Activated CD4-positive, alpha-beta T cell treated with anti-CD3 and anti-CD28 coated beads for 36 hours (primary cell): ENCODE measurements at regions of chr17 and their contacts with region 1.

Region 1: DNA sequence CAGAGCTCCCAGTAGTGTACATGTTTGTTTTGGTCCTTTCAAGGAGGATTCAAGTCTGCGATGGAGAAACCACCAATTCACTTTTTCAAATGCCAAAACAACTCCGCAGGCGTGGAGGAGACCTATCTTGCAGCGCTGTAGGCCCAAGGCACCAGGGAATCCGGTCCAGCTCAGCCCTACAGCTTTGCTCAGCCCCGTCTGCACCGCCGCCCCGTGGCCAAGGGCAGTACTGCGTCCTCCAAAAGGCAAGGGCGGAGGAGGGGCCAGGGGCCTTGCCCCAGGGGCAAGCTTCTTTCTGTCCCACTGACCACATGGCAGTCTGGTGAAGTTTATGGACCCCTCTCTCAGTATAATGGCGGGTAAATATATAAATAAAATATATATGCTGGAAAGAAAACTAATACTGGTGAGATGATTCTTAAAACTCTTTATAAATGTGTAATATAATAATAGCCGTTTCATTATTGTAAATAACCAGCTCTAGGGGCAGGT is 709 bp upstream of the CD300LG start:
- DNase-seq: peak; percentile 89
- ATAC-seq: peak; percentile 99
- H3K4me3 Mint-ChIP-seq: no peak overlapping the region
- H3K27ac Mint-ChIP-seq: no peak overlapping the region
- H3K4me1 Mint-ChIP-seq: no peaks in the 10 kb centered on the region
- H3K27me3 Mint-ChIP-seq: peaks cover 19% of the 10 kb centered on the region

Region 2: GRCh38 chr17:43694077-43694870 is 152.0 kb before region 1 on chr17:
- CTCF ChIA-PET with region 1: interaction called, 5 read pairs
- POLR2A ChIA-PET with region 1: no interaction called
- intact Hi-C with region 1: loop called in 1 of 2 experiments (anchors 5 kb)
- DNase-seq: peak; percentile 86
- ATAC-seq: peak; percentile 99
- H3K4me3 Mint-ChIP-seq: no peak overlapping the region
- H3K27ac Mint-ChIP-seq: no peak overlapping the region
- H3K4me1 Mint-ChIP-seq: no peaks in the 10 kb centered on the region
- H3K27me3 Mint-ChIP-seq: peaks cover 3% of the 10 kb centered on the region

Region 3: DNA sequence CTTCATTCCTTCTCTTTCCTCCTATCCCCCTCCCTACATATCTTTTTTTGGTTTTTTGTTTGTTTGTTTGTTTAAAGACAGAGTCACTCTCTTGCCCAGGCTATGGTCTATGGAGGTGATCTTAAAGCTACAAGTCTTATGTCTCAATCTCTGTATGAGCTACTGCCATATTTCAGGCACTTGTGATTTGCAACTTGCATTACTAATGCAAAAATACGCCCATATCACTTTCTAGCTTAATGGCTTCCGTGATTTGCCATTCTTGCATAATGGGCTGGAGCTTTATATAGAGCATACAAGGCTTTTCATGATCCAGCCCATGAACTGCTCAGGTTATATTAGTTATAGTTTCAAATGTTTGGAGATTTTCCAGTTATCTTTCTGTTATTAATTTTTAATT is 58.5 kb before region 1 on chr17:
- CTCF ChIA-PET with region 1: interaction called, 8 read pairs
- POLR2A ChIA-PET with region 1: no interaction called
- intact Hi-C with region 1: loop called in 1 of 2 experiments (anchors 2 kb)
- DNase-seq: no peak
- ATAC-seq: no peak
- H3K4me3 Mint-ChIP-seq: no peak overlapping the region
- H3K27ac Mint-ChIP-seq: no peak overlapping the region
- H3K4me1 Mint-ChIP-seq: peaks cover 4% of the 10 kb centered on the region
- H3K27me3 Mint-ChIP-seq: peaks cover 19% of the 10 kb centered on the region

Region 4: GRCh38 chr17:43827590-43827989 is 18.7 kb before region 1 on chr17:
- CTCF ChIA-PET with region 1: interaction called, 11 read pairs
- POLR2A ChIA-PET with region 1: no interaction called
- intact Hi-C with region 1: no loop called
- DNase-seq: no peak
- ATAC-seq: no peak
- H3K4me3 Mint-ChIP-seq: no peak overlapping the region
- H3K27ac Mint-ChIP-seq: no peak overlapping the region
- H3K4me1 Mint-ChIP-seq: peaks cover 10% of the 10 kb centered on the region
- H3K27me3 Mint-ChIP-seq: peaks cover 15% of the 10 kb centered on the region

Region 5: DNA sequence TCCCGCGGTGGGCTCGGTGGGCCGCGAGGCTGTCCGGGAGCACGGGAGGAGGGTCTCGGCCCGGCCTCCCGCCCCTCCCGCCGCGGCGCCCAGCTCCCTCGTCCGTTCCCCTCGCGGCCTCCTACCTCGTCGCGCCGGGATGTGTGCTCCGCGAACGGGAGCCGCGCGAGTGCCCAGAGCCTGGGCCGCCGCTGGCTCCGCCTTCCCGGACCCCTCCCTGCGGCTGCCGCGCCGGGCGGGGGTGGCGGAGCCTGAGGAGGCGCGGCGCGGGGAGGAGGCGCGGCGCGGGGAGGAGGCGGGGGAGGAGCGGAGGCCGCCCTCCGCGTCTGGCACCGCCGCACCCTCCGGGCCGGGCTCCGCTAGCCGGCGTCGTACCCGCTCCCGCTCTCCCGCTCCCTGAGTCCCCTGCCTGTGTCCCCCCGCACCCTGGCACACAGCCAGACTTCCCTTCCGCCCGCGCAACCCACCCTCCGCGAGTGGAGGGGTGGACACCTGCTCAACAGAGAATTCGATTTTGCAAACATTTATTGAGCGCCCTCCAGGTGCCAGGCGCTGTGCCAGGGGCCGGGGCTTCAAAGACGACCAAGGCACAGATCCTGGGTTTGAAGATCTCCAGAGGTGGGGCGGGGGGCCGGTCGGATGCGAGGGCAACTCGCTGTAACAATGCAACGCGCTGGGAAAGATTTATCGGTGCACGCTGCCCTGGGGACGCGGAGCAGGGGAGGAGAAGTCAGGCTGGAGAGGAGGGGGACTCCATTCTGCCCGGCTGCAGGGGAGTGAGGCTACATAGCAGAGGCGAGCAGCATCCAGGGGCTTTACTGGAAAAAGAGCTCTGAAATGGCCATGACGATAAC is 13.1 kb before region 1 on chr17 and contains the start of gene MPP3:
- CTCF ChIA-PET with region 1: interaction called, 11 read pairs
- POLR2A ChIA-PET with region 1: no interaction called
- intact Hi-C with region 1: no loop called
- DNase-seq: peak; percentile 63
- ATAC-seq: peak; percentile 74
- H3K4me3 Mint-ChIP-seq: peak within 1 kb of the TSS; percentile 66
- H3K27ac Mint-ChIP-seq: no peak within 1 kb of the TSS
- H3K4me1 Mint-ChIP-seq: peaks cover 17% of the 10 kb centered on the region
- H3K27me3 Mint-ChIP-seq: peaks cover 34% of the 10 kb centered on the region
- total RNA-seq, gene MPP3: 0.37 to 0.41 TPM

Region 6: GRCh38 chr17:43861024-43861621 is 14.9 kb after region 1 on chr17:
- CTCF ChIA-PET with region 1: interaction called, 17 read pairs
- POLR2A ChIA-PET with region 1: no interaction called
- intact Hi-C with region 1: no loop called
- DNase-seq: no peak
- ATAC-seq: no peak
- H3K4me3 Mint-ChIP-seq: no peak overlapping the region
- H3K27ac Mint-ChIP-seq: no peak overlapping the region
- H3K4me1 Mint-ChIP-seq: no peaks in the 10 kb centered on the region
- H3K27me3 Mint-ChIP-seq: peaks cover 3% of the 10 kb centered on the region

Region 7: GRCh38 chr17:44033861-44034408 is 187.7 kb after region 1 on chr17:
- CTCF ChIA-PET with region 1: no interaction called
- POLR2A ChIA-PET with region 1: no interaction called
- intact Hi-C with region 1: no loop called
- DNase-seq: no peak
- ATAC-seq: no peak
- H3K4me3 Mint-ChIP-seq: no peak overlapping the region
- H3K27ac Mint-ChIP-seq: no peak overlapping the region
- H3K4me1 Mint-ChIP-seq: peaks cover 5% of the 10 kb centered on the region
- H3K27me3 Mint-ChIP-seq: no peaks in the 10 kb centered on the region

Region 8: GRCh38 chr17:44066204-44066930 is 220.1 kb after region 1 on chr17 and contains the start of gene LSM12:
- CTCF ChIA-PET with region 1: no interaction called
- POLR2A ChIA-PET with region 1: no interaction called
- intact Hi-C with region 1: no loop called
- DNase-seq: peak; percentile 95
- ATAC-seq: peak; percentile 75
- H3K4me3 Mint-ChIP-seq: peak within 1 kb of the TSS; percentile 93
- H3K27ac Mint-ChIP-seq: peak within 1 kb of the TSS; percentile 97
- H3K4me1 Mint-ChIP-seq: peaks cover 52% of the 10 kb centered on the region
- H3K27me3 Mint-ChIP-seq: no peaks in the 10 kb centered on the region
- total RNA-seq, gene LSM12: 93.1 to 102 TPM